Heart right ventricle (tissue), 16 donors: ENCODE measurements at regions of chr10 and their contacts with region 1.

Region 1: DNA sequence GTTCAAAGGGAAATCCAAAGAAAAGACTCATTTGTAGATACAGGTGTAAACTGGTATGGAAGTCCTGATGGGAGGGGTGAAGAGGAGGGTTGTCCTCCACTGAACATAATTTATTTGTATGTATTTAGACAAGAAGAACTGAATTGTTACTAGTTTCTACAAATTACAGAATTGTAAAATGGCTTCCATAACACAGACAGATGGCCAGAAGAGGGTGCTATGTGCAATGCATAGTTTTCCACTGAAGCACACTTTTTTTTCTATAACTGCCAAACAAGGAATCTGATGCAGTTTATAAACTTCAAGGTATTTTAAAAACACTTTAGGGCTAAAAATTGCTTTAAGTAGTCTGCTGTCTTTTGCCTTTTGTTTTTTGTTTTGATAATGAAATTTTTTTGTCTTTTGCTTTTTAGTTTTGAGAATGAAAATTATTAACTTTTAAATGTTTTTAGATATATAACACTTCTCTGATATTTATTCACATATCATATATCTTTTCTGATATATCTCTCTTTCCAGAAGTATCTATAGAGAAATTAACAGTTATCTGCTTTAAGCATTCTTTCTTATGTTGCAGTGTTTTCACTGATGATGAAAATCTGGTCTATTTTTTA is 58.5 kb downstream of the PHYHIPL start:
- DNase-seq: peak in 1 of 2 donors; percentile 30
- ATAC-seq: no peak
- H3K4me3 ChIP-seq: no peak overlapping the region
- H3K27ac ChIP-seq: no peak overlapping the region
- H3K4me1 ChIP-seq: no peaks in the 10 kb centered on the region
- H3K27me3 ChIP-seq: no peaks in the 10 kb centered on the region
- CTCF ChIP-seq: peak; percentile 30 to 78 (median 62)

Region 2: DNA sequence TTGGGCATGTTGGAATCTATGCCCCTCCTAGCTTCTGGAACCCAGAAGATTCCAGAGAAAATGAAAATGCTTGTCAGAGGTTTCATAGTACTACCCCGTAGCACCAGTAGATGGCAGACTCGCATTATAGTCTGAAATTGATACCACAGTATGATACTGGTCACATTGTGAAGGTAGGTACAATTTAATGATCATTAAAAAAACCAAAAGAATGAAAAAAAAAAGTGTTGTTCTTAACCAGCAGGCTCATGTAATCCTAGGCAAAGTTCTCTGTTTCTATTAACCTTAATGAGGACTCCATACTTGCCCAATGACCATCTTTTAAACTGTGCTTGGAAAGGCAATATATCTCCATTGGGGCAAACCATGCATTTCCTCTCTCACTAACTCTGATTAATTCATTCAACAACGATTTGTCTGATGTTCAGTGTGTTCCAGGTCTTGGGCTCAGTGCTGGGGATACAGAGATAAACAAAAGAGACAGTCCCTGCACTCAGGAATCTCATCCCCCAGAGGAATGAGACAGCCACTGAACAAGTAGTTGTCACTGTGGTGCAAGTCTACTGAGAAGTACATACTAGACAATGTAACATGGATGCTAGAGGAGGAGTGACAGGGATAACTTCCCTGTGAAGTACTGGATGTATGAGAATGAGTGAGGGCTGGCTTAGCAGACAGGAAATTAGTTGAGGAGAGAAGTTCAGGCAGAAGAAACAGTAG is 282.0 kb before region 1 on chr10:
- intact Hi-C with region 1: loop called in 4 of 10 experiments (anchors 2 to 5 kb)
- DNase-seq: peak in 1 of 2 donors; percentile 46
- ATAC-seq: peak; percentile 67 to 80 (median 72)
- H3K4me3 ChIP-seq: no peak overlapping the region
- H3K27ac ChIP-seq: peak overlapping the region in 8 of 10 donors; percentile 1 to 63 (median 46)
- H3K4me1 ChIP-seq: peaks cover 0 to 5% (median 0%) of the 10 kb centered on the region in 9 donors
- H3K27me3 ChIP-seq: no peaks in the 10 kb centered on the region
- CTCF ChIP-seq: peak; percentile 67 to 90 (median 78)

Region 3: DNA sequence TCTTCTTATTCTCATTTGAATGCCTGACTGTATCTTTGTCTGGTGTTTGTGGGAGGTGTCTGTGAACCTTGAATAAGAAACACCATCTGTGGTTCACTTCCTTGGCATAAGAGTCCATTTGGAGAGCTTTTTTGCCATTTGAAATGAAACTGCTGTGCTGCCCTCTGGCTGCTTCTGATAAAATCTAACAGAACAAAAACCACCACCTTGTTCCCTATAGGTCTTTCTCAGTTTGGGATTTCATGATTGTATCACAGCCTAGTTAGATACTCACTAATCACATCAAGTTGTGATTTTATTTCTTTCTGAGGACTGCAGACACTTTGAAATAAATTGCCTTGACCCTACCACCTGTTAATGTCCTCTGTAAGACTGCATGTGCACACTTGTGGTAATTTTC is 230.2 kb after region 1 on chr10:
- intact Hi-C with region 1: loop called in 8 of 10 experiments (anchors 5 to 10 kb)
- DNase-seq: peak in 1 of 2 donors; percentile 19
- ATAC-seq: peak in 2 of 8 donors; percentile 38 to 42
- H3K4me3 ChIP-seq: no peak overlapping the region
- H3K27ac ChIP-seq: no peak overlapping the region
- H3K4me1 ChIP-seq: peaks cover 0 to 8% (median 0%) of the 10 kb centered on the region in 9 donors
- H3K27me3 ChIP-seq: no peaks in the 10 kb centered on the region
- CTCF ChIP-seq: peak in 8 of 9 donors; percentile 12 to 63 (median 48)

Region 4: GRCh38 chr10:59580026-59580863 is 345.3 kb after region 1 on chr10:
- intact Hi-C with region 1: loop called (anchors 2 to 10 kb)
- DNase-seq: no peak
- ATAC-seq: peak in 5 of 8 donors; percentile 54 to 59 (median 56)
- H3K4me3 ChIP-seq: no peak overlapping the region
- H3K27ac ChIP-seq: peak overlapping the region in 3 of 10 donors; percentile 11 to 35 (median 24)
- H3K4me1 ChIP-seq: peaks cover 0 to 29% (median 0%) of the 10 kb centered on the region in 9 donors
- H3K27me3 ChIP-seq: no peaks in the 10 kb centered on the region
- CTCF ChIP-seq: peak; percentile 4 to 79 (median 52)

Region 5: DNA sequence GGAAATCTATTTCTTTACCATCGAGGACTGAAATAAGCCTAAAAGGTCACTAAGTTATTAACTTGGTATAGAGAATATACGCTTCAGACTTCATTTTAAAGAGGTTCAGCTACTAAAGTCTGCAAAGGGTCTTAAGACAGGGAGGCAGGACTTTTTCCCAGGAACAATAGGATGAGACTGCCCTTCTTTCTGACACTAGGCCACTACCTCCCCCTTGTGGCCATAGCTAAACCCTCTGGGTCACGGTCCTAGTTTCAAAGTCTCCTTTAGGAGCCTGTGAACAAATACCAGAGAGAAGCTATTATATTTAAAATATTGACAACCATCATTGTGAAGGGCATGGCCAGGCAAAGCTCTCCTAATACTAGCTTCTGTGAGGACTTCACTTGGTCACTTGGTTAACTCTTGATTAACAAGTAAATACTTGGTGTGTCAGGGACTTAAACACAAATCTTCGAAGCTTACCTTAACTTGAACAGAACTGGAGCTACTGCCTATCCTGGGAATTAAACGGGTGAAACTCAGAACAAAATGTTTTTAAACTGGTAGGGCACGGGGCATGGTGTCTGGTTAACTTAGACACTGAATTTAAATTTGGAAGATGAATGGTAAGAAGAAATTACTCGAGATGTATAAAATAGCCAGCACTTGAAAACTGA is 595.8 kb after region 1 on chr10:
- intact Hi-C with region 1: loop called in 1 of 10 experiments (anchors 5 kb)
- DNase-seq: peak in 1 of 2 donors; percentile 44
- ATAC-seq: peak in 7 of 8 donors; percentile 48 to 74 (median 68)
- H3K4me3 ChIP-seq: no peak overlapping the region
- H3K27ac ChIP-seq: no peak overlapping the region
- H3K4me1 ChIP-seq: peaks cover 0 to 50% (median 9%) of the 10 kb centered on the region in 9 donors
- H3K27me3 ChIP-seq: no peaks in the 10 kb centered on the region
- CTCF ChIP-seq: peak; percentile 53 to 85 (median 81)